Head of caudate nucleus (tissue), 42 donors: ENCODE measurements at regions of chr2 and their contacts with region 1.

Region 1: DNA sequence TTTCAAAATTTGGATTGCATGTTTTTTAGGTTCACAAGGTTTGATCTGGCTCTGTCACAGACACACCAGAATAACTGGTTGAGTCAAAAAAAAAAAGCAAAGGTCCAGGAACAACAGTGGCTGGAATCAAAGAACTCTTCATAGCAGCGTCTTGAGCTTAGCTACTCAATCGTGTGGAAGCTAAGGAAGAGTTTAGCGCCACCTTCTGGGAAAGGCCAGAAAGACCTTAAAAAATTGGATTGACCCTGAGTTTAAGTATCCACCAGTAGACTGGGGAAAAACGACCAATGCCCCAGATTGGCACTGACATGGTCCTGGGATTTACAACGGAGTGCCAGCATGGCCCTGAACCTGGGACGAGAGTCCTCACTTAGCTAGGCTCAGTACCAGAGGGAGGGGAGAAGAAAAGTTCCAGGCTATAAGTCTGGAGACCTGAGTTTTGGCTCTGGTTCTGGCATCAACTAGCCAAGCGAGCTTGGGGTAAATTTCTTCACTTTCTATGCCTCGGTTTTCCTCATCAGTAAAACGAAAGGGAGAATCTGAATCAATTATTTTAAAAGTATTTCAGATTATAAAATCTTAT is 71.1 kb upstream of the TFCP2L1 start:
- DNase-seq: peak in 28 of 42 donors; percentile 26 to 84 (median 60)

Region 2: DNA sequence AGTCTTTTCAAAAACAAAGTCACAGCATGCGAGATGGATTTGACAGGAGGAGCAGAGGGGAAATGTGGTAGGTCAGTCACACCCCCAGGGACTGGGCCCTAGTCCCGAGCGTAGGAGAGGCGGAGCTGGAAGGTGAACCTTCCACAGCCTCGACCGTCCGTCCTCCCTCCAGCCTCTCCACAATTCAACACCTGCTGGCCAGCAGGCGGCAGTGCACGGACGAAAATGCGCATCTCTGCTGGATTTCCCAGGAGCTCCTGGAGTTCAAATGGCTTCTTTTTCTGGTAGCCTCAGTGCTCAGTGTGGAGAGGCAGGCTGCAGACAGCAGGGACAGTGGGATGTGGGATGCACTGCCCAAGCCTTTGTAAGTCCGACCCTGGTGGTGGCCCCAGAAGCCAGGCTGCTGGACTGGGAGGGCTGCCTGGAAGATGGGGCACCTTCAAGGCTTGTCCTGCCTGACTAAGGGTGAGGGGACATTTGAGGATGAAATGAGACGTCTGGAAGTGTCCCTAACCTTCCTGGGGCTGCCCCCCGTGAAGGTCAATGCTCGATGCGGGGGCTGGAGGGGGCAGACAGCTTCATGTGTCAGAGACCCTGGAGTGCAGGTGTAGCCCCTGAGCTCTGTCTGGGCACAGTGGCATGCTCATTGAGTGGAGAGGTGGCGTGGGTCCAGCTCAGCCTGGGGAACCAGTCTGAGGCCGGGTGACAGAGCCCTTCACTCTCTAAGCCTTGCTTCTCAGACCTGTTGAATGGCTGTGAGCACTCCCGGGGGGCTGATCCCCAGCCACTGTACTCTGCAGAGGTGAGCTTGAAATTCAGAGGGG is 260.7 kb before region 1 on chr2:
- intact Hi-C with region 1: loop called (anchors 10 kb)
- DNase-seq: peak; percentile 38 to 82 (median 67)